ENCODE measurements at regions of chr1 and their contacts with region 1.

Region 1: GRCh38 chr1:19439464-19440171 is 45.7 kb downstream of the CAPZB start:
- DNase-seq: no peak

Region 2: GRCh38 chr1:19400875-19401534 is 38.6 kb before region 1 on chr1:
- intact Hi-C with region 1: loop called (anchors 5 kb)
- DNase-seq: no peak

Region 3: GRCh38 chr1:19547814-19548213 is 108.2 kb after region 1 on chr1:
- intact Hi-C with region 1: no loop called
- DNase-seq: no peak

Region 4: GRCh38 chr1:19596714-19597495 is 157.3 kb after region 1 on chr1:
- intact Hi-C with region 1: loop called (anchors 2 kb)
- DNase-seq: peak; percentile 97

Measured in cardiac septum (tissue), 1 donor.